ENCODE measurements at regions of chr18 and their contacts with region 1.

Region 1: DNA sequence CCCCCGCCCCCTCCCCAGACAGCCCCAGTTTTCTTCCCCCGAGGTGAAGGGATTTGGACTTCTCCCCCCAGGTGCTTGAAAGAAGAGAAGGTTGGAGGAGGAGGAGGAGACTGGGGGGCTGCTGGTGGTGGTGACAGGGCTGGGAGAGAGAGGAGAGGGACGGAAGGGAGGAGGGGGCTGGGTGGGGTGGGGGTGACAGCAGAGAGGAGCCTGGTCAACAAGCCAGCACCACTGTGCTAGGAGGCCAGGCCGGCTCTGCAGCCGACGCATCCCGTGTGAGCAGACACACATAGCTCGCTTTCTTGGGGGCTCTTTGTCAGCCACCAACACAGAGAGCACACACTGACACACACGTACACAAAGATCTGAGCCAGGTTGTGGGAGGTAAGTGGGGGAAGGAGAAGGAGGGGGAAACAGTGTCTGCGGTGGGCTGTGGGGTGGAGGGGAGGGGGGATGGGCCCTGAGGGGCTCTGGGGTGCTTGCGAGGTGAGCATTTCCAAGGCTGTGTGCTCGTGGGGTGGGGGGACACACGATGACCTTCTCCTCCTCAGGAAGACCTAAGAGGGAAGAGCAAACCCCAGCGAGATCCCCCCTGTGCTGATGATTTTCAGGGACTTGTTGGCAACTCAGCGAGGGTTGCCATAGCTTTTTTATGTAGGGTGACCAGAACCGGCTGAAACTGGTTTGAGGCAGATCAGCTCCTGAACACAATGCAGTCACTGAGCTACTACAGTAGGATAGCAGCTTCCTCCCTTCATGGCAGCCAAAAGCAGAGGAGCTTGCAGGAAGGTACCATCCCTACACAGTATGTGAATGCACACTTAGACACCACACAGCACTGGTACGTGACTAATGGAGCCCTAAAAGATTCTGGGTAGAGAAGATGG is at the start of gene ZNF532:
- DNase-seq: peak; percentile 67
- H3K4me3 ChIP-seq: peak within 1 kb of the TSS; percentile 34 to 66 (median 51)
- H3K27ac ChIP-seq: peak within 1 kb of the TSS; percentile 87 to 96 (median 92)
- H3K4me1 ChIP-seq: peaks cover 0 to 81% (median 75%) of the 10 kb centered on the region in 4 donors
- H3K27me3 ChIP-seq: no peaks in the 10 kb centered on the region
- CTCF ChIP-seq: no peak
- EP300 ChIP-seq: no peak
- POLR2A ChIP-seq: no peak
- total RNA-seq, gene ZNF532: 71.0 to 104 (median 78.8) TPM

Region 2: GRCh38 chr18:58781627-58782194 is 82.7 kb before region 1 on chr18:
- intact Hi-C with region 1: loop called (anchors 5 kb)
- DNase-seq: peak; percentile 85
- H3K4me3 ChIP-seq: no peak overlapping the region
- H3K27ac ChIP-seq: no peak overlapping the region
- H3K4me1 ChIP-seq: peaks cover 0 to 28% (median 14%) of the 10 kb centered on the region in 4 donors
- H3K27me3 ChIP-seq: no peaks in the 10 kb centered on the region
- CTCF ChIP-seq: peak; percentile 93 to 97 (median 94)
- EP300 ChIP-seq: no peak
- POLR2A ChIP-seq: no peak

Region 3: DNA sequence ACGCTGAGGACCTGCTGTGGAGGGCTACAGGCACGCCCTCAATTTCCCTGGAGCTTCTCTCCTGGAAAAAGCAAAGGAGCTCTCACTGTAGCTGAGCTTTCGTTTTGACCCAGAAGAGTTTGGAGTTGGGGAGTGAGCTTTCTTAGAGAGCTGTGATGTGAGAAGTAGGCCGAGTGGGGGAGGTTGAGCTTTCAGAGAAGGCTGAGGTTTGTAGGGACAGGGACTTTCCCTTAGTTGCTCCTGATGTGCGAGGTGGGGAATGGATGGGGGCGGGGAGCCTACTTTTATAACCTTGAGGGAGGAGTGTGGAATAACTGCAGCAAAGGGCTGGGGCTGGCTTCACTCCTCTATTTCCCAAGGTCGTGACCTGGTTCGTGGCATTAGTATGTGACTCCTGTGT is 47.4 kb after region 1 on chr18:
- intact Hi-C with region 1: loop called (anchors 5 kb)
- DNase-seq: no peak
- H3K4me3 ChIP-seq: no peak overlapping the region
- H3K27ac ChIP-seq: peak overlapping the region; percentile 49 to 65 (median 59)
- H3K4me1 ChIP-seq: peaks cover 0 to 38% (median 29%) of the 10 kb centered on the region in 4 donors
- H3K27me3 ChIP-seq: no peaks in the 10 kb centered on the region
- CTCF ChIP-seq: no peak
- EP300 ChIP-seq: no peak
- POLR2A ChIP-seq: no peak

Region 4: DNA sequence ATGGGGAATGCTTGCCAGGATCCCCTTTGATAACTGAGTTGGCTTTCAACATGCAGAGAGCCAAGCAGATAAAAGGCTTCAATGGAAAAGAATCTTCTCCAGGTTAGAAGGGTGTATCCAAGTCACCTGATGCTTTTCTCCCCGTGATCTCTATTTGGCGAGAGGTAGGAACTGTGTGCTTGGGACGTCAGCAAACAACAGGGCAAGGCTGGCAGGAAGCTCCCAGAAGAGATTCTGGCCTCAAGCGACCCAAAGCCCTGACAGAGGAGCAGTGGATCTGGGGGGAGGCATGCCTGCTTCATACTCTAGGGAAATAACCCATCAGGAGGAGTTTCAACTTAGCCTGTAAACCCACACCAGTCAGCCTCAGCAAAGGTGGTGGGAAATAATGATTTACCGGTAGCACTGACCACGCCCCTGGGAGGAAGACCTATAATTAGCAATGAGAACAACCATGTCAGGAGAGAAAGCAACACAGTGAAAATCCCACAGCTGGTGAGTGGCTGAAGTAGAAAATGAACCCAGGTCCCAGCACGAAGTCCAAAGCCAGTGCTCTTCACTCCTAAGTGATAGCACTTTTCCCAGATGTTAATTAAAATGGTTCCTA is 199.0 kb after region 1 on chr18:
- intact Hi-C with region 1: loop called (anchors 5 kb)
- DNase-seq: peak; percentile 77
- H3K4me3 ChIP-seq: no peak overlapping the region
- H3K27ac ChIP-seq: peak overlapping the region in 3 of 4 donors; percentile 48 to 62 (median 49)
- H3K4me1 ChIP-seq: peaks cover 0 to 17% (median 6%) of the 10 kb centered on the region in 4 donors
- H3K27me3 ChIP-seq: no peaks in the 10 kb centered on the region
- CTCF ChIP-seq: no peak
- EP300 ChIP-seq: no peak
- POLR2A ChIP-seq: no peak

Measured in sigmoid colon (tissue), 7 donors.